ENCODE measurements at regions of chr7 and their contacts with region 1.

Region 1: DNA sequence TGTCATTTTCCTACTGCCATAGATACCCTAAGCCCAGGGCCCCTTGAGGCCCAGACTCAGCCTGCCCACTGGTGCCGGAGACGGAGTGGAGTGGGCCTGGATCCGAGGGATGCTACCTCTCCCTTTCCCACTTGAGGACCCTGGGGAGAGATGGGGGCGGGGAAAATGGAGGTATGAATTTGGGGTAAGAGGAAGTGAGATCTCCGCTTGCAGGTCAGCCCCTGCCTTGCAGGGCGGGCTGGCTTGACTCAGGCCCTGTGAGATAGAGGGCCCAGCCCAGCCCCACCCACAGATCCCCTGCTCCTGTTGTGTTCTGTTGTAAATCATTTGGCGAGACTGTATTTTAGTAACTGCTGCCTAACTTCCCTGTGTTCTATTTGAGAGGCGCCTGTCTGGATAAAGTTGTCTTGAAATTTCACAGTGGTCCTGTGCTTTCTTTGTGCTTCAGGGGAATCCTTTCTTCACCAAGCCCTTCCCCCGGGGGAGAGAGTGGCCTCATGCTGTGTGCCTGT is 13.2 kb downstream of the YKT6 start:
- DNase-seq: no peak
- H3K4me3 ChIP-seq: no peak overlapping the region
- H3K4me3 Mint-ChIP-seq: no peak overlapping the region
- H3K27ac Mint-ChIP-seq: no peak overlapping the region
- H3K4me1 ChIP-seq: no peaks in the 10 kb centered on the region
- H3K4me1 Mint-ChIP-seq: no peaks in the 10 kb centered on the region
- H3K27me3 ChIP-seq: no peaks in the 10 kb centered on the region
- H3K27me3 Mint-ChIP-seq: no peaks in the 10 kb centered on the region
- CTCF ChIP-seq: no peak

Region 2: DNA sequence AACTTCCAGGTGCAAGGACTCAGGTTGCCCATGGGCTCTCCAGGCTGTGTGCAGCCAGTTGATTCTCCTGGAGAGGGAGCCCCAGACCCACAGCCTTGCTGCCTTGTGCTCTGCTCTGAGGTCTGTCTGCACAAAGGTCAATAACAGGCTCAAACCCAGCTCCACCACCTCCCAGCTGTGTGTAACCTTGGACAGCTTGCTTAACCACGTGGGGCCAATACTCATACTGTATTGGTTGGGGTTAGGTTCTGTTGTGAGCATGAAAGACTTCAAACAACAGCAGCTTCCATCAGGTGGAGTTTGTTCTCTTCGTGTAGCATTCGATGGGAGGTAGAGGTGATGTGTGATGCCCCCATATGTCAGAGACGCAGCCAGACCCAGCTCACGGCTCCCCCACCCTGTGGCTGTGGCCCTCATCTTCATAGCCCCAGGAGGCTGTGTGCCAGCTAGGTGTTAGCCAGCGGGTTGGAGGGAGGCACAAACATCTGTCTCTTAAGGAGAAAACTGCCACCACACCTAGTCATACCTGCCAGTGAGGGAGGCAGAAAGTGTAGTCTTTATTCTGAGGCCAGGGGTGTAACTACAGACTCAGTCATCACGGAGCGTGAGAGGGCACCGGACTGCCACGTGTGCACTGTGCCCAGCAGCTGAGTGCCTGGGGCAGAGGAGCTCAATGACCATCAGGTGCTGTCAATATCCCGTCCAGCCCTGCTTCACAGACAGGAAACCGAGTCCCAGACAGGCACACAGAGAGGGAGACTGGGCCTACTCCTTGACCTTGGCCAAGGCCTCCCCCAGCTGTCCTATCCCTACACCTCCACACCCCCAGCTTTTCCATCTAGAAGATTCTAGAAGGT is 82.5 kb before region 1 on chr7:
- CTCF ChIA-PET with region 1: interaction called, 12 read pairs
- POLR2A ChIA-PET with region 1: interaction called, 5 read pairs
- intact Hi-C with region 1: loop called (anchors 1 kb)
- DNase-seq: peak; percentile 83 to 85
- H3K4me3 ChIP-seq: no peak overlapping the region
- H3K4me3 Mint-ChIP-seq: no peak overlapping the region
- H3K27ac Mint-ChIP-seq: no peak overlapping the region
- H3K4me1 ChIP-seq: peaks cover 15% of the 10 kb centered on the region
- H3K4me1 Mint-ChIP-seq: peaks cover 8% of the 10 kb centered on the region
- H3K27me3 ChIP-seq: no peaks in the 10 kb centered on the region
- H3K27me3 Mint-ChIP-seq: no peaks in the 10 kb centered on the region
- CTCF ChIP-seq: peak; percentile 42 to 83

Region 3: DNA sequence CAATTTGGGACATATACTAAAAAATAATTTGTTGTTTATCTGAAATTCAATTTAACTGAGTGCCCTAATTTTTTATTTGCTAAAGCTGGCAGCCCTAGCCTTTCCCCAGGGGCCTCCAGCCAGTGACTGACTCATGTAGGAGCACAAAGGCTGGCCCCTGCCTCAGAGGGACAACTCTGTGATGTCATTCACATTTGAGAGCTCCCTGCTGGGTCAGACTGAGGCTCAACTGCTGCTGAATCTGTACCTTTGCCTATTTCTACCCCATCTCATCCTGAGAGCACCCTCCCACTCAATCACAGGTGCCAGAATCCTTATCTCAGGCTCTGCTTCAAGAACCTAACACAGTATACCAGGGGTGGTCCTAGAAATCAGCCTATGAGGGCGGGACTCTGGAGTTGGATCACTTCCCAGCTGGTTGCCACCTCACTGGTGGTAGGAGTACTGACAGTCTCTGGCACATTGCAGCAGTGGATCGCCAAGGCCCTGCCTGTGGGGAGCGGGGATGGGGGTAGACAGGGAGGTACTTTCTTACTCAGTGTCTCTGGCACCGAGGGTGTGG is 36.3 kb before region 1 on chr7:
- CTCF ChIA-PET with region 1: no interaction called
- POLR2A ChIA-PET with region 1: no interaction called
- intact Hi-C with region 1: no loop called
- DNase-seq: no peak
- H3K4me3 ChIP-seq: no peak overlapping the region
- H3K4me3 Mint-ChIP-seq: no peak overlapping the region
- H3K27ac Mint-ChIP-seq: no peak overlapping the region
- H3K4me1 ChIP-seq: peaks cover 9% of the 10 kb centered on the region; the same call in 1 of the 2 replicates
- H3K4me1 Mint-ChIP-seq: no peaks in the 10 kb centered on the region
- H3K27me3 ChIP-seq: no peaks in the 10 kb centered on the region; the same call in 1 of the 2 replicates
- H3K27me3 Mint-ChIP-seq: peaks cover 11% of the 10 kb centered on the region
- CTCF ChIP-seq: no peak

Measured in Caco-2 (cell line).